ENCODE measurements at regions of chr4 and their contacts with region 1.

Region 1: DNA sequence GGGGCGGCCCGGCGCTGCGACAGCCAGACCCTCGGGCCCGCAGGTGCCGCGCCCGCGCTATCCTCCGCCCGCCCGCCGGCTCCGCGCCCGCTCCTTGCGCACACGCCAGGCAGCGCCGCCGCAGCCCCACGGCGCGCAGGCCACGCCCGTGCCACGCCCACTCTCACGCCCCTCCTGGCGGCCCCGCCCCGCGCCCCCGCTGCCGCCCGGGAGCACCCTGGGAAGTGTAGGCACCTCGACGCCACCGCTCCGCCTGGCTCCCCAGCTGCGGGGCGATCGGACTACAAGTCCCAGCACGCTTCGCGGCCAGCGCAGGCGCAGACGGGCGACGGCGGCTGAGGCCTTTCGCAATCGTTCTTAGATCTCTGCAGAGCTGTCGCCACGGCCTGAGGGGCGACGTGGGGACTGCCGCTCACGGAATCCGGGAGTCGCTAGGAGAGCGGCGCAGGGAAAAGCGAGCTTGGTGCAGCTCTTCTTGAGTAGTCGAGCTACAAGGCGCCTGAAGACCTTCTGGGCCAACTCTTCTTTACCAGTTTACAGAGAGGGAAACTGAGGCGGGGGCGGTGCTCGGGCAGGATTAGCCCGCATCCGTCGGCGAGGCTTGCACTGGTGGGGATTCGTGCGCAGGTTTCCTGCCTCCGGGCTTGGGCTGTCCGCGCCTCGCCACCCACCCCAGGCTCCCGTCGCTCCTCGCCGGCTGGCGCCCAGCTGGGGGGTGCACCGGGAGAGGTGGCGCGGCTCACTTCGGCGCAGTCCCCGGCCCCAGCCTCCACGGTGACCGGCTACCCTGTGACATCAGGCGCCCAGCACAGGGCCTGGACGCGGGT is at the start of gene ABLIM2:
- DNase-seq: peak; percentile 97 to 100 (median 99)
- ATAC-seq: peak; percentile 98
- H3K4me3 ChIP-seq: peak within 1 kb of the TSS; percentile 94
- H3K4me3 Mint-ChIP-seq: peak within 1 kb of the TSS; percentile 91
- H3K27ac ChIP-seq: no peak within 1 kb of the TSS
- H3K27ac Mint-ChIP-seq: peak within 1 kb of the TSS; percentile 67
- H3K4me1 ChIP-seq: peaks cover 28% of the 10 kb centered on the region
- H3K4me1 Mint-ChIP-seq: peaks cover 18% of the 10 kb centered on the region
- H3K27me3 ChIP-seq: peaks cover 0 to 7% of the 10 kb centered on the region in 2 experiments
- H3K27me3 Mint-ChIP-seq: no peaks in the 10 kb centered on the region
- CTCF ChIP-seq: no peak
- total RNA-seq, gene ABLIM2: 2.5 to 2.7 TPM

Region 2: GRCh38 chr4:6269616-6270511 is 1889.1 kb before region 1 on chr4 and contains the start of gene WFS1:
- CTCF ChIA-PET with region 1: no interaction called
- POLR2A ChIA-PET with region 1: no interaction called
- intact Hi-C with region 1: loop called in 1 of 2 experiments (anchors 5 kb)
- DNase-seq: peak; percentile 89 to 99 (median 98)
- ATAC-seq: peak; percentile 99
- H3K4me3 ChIP-seq: peak within 1 kb of the TSS; percentile 64
- H3K4me3 Mint-ChIP-seq: peak within 1 kb of the TSS; percentile 92
- H3K27ac ChIP-seq: no peak within 1 kb of the TSS
- H3K27ac Mint-ChIP-seq: peak within 1 kb of the TSS; percentile 28
- H3K4me1 ChIP-seq: peaks cover 23% of the 10 kb centered on the region
- H3K4me1 Mint-ChIP-seq: peaks cover 16% of the 10 kb centered on the region
- H3K27me3 ChIP-seq: no peaks in the 10 kb centered on the region
- H3K27me3 Mint-ChIP-seq: no peaks in the 10 kb centered on the region
- CTCF ChIP-seq: no peak
- total RNA-seq, gene WFS1: 1.3 to 1.7 TPM

Region 3: GRCh38 chr4:8132947-8133705 is 25.8 kb before region 1 on chr4:
- CTCF ChIA-PET with region 1: no interaction called
- POLR2A ChIA-PET with region 1: no interaction called
- intact Hi-C with region 1: no loop called
- DNase-seq: no peak
- ATAC-seq: no peak
- H3K4me3 ChIP-seq: no peak overlapping the region
- H3K4me3 Mint-ChIP-seq: no peak overlapping the region
- H3K27ac ChIP-seq: no peak overlapping the region
- H3K27ac Mint-ChIP-seq: no peak overlapping the region
- H3K4me1 ChIP-seq: no peaks in the 10 kb centered on the region
- H3K4me1 Mint-ChIP-seq: no peaks in the 10 kb centered on the region
- H3K27me3 ChIP-seq: no peaks in the 10 kb centered on the region
- H3K27me3 Mint-ChIP-seq: no peaks in the 10 kb centered on the region
- CTCF ChIP-seq: no peak

Region 4: GRCh38 chr4:8176547-8177399 is 17.9 kb after region 1 on chr4:
- CTCF ChIA-PET with region 1: interaction called, 10 read pairs
- POLR2A ChIA-PET with region 1: no interaction called
- intact Hi-C with region 1: no loop called
- DNase-seq: peak in 12 of 14 experiments; percentile 30 to 69 (median 41)
- ATAC-seq: peak; percentile 97
- H3K4me3 ChIP-seq: no peak overlapping the region
- H3K4me3 Mint-ChIP-seq: no peak overlapping the region
- H3K27ac ChIP-seq: no peak overlapping the region
- H3K27ac Mint-ChIP-seq: no peak overlapping the region
- H3K4me1 ChIP-seq: peaks cover 10% of the 10 kb centered on the region
- H3K4me1 Mint-ChIP-seq: no peaks in the 10 kb centered on the region
- H3K27me3 ChIP-seq: no peaks in the 10 kb centered on the region
- H3K27me3 Mint-ChIP-seq: peaks cover under 1% of the 10 kb centered on the region
- CTCF ChIP-seq: peak; percentile 70

Region 5: DNA sequence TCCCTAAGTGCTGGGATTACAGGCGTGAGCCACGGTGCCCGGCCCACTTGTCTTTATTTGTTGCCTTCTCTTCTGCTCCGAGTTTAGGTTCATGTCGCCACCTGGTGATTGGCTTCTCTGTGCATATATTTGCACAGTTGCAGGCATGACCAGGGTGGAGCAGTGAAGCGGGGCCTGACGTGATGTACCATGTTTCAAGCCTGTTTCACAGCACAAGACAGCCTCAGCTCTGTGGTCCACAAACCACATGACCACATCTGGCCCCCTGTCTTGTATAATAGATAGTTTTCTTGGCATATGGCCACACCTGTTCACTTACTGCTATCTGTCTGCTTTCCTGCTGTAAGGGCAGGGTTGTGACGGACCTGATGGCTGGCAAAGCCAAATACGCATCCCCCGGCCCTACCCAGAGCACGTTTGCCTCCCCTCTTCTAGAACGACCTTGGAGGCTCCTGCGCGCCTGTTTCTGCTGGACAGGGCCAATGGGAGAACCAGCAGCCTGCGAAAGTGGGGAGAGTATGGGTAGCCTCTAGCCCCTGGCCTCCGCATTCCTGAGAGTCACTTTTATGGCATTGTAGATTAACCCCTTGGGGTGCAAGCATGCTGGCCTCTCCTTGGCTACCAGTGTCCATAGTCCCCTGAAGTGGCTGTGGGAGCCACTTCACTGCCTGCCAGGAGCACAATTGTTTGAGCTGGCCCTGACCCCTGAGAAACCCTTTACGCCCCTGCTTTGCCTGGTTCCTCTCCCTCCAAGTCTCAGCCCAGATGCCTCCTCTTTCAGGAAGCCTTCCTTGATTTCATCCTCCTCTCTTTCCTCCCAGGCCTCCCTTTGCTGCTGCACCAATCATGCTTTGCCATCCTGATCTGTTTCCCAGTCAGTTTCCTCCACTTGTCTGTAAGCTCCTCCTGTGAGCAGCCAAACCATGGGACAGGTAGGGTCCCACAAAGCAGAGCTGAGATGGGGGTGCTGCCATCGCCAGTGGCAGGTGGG is 34.1 kb after region 1 on chr4:
- CTCF ChIA-PET with region 1: no interaction called
- POLR2A ChIA-PET with region 1: no interaction called
- intact Hi-C with region 1: loop called in 1 of 2 experiments (anchors 2 kb)
- DNase-seq: peak in 6 of 14 experiments; percentile 25 to 64 (median 40)
- ATAC-seq: peak; percentile 88
- H3K4me3 ChIP-seq: no peak overlapping the region
- H3K4me3 Mint-ChIP-seq: no peak overlapping the region
- H3K27ac ChIP-seq: no peak overlapping the region
- H3K27ac Mint-ChIP-seq: no peak overlapping the region
- H3K4me1 ChIP-seq: peaks cover 7% of the 10 kb centered on the region
- H3K4me1 Mint-ChIP-seq: peaks cover 9% of the 10 kb centered on the region
- H3K27me3 ChIP-seq: peaks cover 0 to under 1% of the 10 kb centered on the region in 2 experiments
- H3K27me3 Mint-ChIP-seq: no peaks in the 10 kb centered on the region
- CTCF ChIP-seq: no peak

Region 6: DNA sequence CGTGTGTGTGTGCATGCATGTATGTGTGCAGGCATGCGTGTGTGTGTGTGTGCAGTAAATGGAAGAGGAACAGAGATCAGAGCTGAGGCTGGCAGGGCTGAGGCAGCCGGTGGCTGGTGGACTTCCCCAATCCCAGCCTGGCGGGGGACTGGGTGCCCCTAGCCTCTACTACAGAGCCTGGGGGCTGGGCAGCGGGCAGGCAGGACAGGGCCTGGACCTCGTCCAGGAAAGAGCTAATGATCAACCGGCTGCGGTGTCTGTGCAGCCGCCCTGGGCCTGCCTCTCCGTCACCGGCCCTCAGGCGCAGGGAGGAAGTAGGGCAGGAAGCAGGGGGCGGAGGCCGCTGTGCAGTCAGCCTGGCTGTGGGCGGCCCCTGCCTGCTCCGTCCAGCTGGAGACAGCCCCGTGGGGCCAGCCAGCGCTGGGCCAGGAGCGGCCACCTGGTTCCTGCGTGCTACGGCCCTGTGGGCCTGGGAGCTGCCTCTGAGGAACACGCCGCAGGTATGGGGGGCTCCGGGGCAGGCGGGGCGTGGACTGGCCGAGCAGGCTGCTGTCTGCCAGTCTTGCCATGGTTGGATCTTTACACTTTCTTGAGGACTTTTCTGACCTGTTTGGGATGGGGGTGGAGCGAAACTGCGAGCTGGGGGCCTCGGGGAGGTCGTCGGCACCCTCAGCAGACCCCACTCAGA is 40.1 kb after region 1 on chr4 and contains the start of gene SH3TC1:
- CTCF ChIA-PET with region 1: no interaction called
- POLR2A ChIA-PET with region 1: interaction called, 20 read pairs
- intact Hi-C with region 1: loop called (anchors 2 kb)
- DNase-seq: peak; percentile 34 to 81 (median 56)
- ATAC-seq: peak; percentile 55
- H3K4me3 ChIP-seq: peak within 1 kb of the TSS; percentile 70
- H3K4me3 Mint-ChIP-seq: peak within 1 kb of the TSS; percentile 99
- H3K27ac ChIP-seq: peak within 1 kb of the TSS; percentile 68 to 79
- H3K27ac Mint-ChIP-seq: peak within 1 kb of the TSS; percentile 99
- H3K4me1 ChIP-seq: peaks cover 53% of the 10 kb centered on the region
- H3K4me1 Mint-ChIP-seq: peaks cover 37% of the 10 kb centered on the region
- H3K27me3 ChIP-seq: no peaks in the 10 kb centered on the region
- H3K27me3 Mint-ChIP-seq: no peaks in the 10 kb centered on the region
- CTCF ChIP-seq: no peak
- total RNA-seq, gene SH3TC1: 119 to 127 TPM

Region 7: DNA sequence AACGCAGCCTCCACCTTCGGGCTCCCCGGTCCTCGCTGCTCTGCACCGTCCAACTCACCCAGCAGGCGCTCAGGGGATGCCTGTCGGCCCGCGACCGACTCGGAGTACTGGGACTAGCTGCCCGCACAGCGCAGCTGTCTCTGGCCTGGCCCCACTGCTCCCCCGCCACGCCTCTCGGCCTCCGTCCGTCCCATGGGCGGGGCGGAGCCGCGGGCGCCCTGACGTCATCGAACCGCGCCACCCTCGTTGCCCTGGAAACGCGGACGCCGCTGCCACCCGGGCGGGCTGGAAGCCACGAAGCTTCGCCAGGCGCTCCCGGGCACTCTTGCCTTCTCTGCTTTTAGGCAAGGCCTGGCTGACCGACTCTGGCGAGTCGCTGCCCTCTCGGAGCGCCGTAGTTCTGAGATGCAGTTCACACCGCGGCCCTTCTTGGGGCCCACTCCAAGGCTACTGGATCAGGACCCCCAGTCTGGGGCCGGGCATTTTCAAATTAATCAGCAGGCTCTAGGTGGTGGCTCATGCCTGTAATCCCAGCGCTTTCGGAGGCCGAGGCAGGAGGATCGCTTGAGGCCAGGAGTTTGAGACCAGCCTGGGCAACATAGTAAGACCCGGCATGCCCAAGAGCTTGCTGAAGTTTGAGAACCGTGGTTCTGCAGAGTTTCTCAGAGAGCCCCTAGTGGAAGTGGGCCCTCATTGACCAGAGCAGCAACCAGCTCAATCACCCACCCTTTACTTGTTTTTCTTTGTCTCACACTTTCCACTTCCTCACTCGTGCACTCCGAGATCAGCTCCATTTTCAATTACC is 269.6 kb after region 1 on chr4:
- CTCF ChIA-PET with region 1: no interaction called
- POLR2A ChIA-PET with region 1: interaction called, 3 read pairs
- intact Hi-C with region 1: loop called in 1 of 2 experiments (anchors 5 kb)
- DNase-seq: peak; percentile 80 to 98 (median 90)
- ATAC-seq: peak; percentile 84
- H3K4me3 ChIP-seq: peak overlapping the region; percentile 75
- H3K4me3 Mint-ChIP-seq: peak overlapping the region; percentile 96
- H3K27ac ChIP-seq: no peak overlapping the region
- H3K27ac Mint-ChIP-seq: peak overlapping the region; percentile 85
- H3K4me1 ChIP-seq: peaks cover 22% of the 10 kb centered on the region
- H3K4me1 Mint-ChIP-seq: peaks cover 47% of the 10 kb centered on the region
- H3K27me3 ChIP-seq: no peaks in the 10 kb centered on the region
- H3K27me3 Mint-ChIP-seq: no peaks in the 10 kb centered on the region
- CTCF ChIP-seq: no peak

Region 8: DNA sequence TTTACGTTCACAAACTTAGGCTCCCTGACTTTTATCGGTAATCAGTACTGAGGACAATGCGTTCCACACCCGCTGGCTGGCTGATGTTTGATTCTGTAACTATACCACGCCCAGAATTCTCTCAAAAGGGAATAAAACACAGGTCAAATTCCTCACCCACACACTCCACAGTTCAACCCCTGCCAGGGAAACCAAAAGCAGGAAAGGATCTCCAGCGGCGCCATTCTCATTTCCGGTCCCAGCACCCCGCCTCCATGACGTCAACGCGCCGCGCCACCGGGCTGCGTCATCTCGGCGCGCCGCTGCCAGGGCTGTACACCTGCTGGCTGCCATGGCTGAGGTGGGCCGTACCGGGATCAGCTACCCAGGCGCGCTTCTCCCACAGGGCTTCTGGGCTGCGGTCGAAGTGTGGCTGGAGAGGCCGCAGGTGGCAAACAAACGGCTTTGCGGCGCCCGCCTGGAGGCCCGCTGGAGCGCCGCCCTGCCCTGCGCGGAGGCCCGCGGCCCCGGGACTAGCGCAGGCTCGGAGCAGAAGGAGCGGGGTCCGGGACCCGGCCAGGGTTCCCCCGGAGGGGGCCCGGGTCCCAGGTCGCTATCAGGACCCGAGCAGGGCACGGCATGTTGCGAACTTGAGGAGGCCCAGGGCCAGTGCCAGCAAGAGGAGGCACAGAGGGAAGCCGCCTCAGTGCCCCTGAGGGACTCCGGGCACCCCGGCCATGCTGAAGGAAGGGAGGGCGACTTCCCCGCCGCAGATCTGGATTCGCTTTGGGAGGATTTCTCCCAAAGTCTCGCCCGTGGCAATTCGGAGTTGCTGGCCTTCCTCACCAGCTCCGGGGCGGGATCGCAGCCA is 281.8 kb after region 1 on chr4 and contains the starts of genes ACOX3 and TRMT44:
- CTCF ChIA-PET with region 1: no interaction called
- POLR2A ChIA-PET with region 1: no interaction called
- intact Hi-C with region 1: loop called (anchors 2 kb)
- DNase-seq: peak; percentile 86 to 99 (median 94)
- ATAC-seq: peak; percentile 88
- H3K4me3 ChIP-seq: peak within 1 kb of the TSS; percentile 97
- H3K4me3 Mint-ChIP-seq: peak within 1 kb of the TSS; percentile 99
- H3K27ac ChIP-seq: peak within 1 kb of the TSS; percentile 88 to 96
- H3K27ac Mint-ChIP-seq: peak within 1 kb of the TSS; percentile 99
- H3K4me1 ChIP-seq: peaks cover 53% of the 10 kb centered on the region
- H3K4me1 Mint-ChIP-seq: peaks cover 88% of the 10 kb centered on the region
- H3K27me3 ChIP-seq: no peaks in the 10 kb centered on the region
- H3K27me3 Mint-ChIP-seq: no peaks in the 10 kb centered on the region
- CTCF ChIP-seq: no peak
- total RNA-seq, gene ACOX3: 4.9 to 6.1 TPM
- total RNA-seq, gene TRMT44: 25.6 to 29.2 TPM